ENCODE measurements at regions of chr19 and their contacts with region 1.

Region 1: GRCh38 chr19:6737284-6738046 is at the start of gene GPR108:
- DNase-seq: peak; percentile 100
- H3K4me3 ChIP-seq: peak within 1 kb of the TSS; percentile 49 to 99 (median 95)
- H3K27ac ChIP-seq: peak within 1 kb of the TSS; percentile 88
- H3K4me1 ChIP-seq: peaks cover 46% of the 10 kb centered on the region
- H3K27me3 ChIP-seq: no peaks in the 10 kb centered on the region
- CTCF ChIP-seq: no peak
- POLR2A ChIP-seq: peak; percentile 51
- total RNA-seq, gene GPR108: 52.6 and 68.5 TPM in 2 replicates

Region 2: GRCh38 chr19:4909897-4910593 is 1827.4 kb before region 1 on chr19:
- CTCF ChIA-PET with region 1: no interaction called
- POLR2A ChIA-PET with region 1: no interaction called
- dilution Hi-C with region 1: no loop called
- intact Hi-C with region 1: loop called (anchors 5 kb)
- DNase-seq: peak; percentile 87
- H3K4me3 ChIP-seq: peak overlapping the region; percentile 71 to 77 (median 74)
- H3K27ac ChIP-seq: peak overlapping the region; percentile 58
- H3K4me1 ChIP-seq: peaks cover 26% of the 10 kb centered on the region
- H3K27me3 ChIP-seq: no peaks in the 10 kb centered on the region
- CTCF ChIP-seq: no peak
- POLR2A ChIP-seq: no peak

Region 3: GRCh38 chr19:6212403-6213265 is 524.8 kb before region 1 on chr19:
- CTCF ChIA-PET with region 1: no interaction called
- POLR2A ChIA-PET with region 1: no interaction called
- dilution Hi-C with region 1: no loop called
- intact Hi-C with region 1: no loop called
- DNase-seq: no peak
- H3K4me3 ChIP-seq: no peak overlapping the region
- H3K27ac ChIP-seq: no peak overlapping the region
- H3K4me1 ChIP-seq: no peaks in the 10 kb centered on the region
- H3K27me3 ChIP-seq: no peaks in the 10 kb centered on the region
- CTCF ChIP-seq: no peak
- POLR2A ChIP-seq: no peak

Region 4: GRCh38 chr19:6424939-6425731 is 312.3 kb before region 1 on chr19:
- CTCF ChIA-PET with region 1: no interaction called
- POLR2A ChIA-PET with region 1: no interaction called
- dilution Hi-C with region 1: no loop called
- intact Hi-C with region 1: loop called (anchors 10 kb)
- DNase-seq: peak; percentile 100
- H3K4me3 ChIP-seq: no peak overlapping the region
- H3K27ac ChIP-seq: no peak overlapping the region
- H3K4me1 ChIP-seq: peaks cover 8% of the 10 kb centered on the region
- H3K27me3 ChIP-seq: no peaks in the 10 kb centered on the region
- CTCF ChIP-seq: no peak
- POLR2A ChIP-seq: peak; percentile 41

Region 5: DNA sequence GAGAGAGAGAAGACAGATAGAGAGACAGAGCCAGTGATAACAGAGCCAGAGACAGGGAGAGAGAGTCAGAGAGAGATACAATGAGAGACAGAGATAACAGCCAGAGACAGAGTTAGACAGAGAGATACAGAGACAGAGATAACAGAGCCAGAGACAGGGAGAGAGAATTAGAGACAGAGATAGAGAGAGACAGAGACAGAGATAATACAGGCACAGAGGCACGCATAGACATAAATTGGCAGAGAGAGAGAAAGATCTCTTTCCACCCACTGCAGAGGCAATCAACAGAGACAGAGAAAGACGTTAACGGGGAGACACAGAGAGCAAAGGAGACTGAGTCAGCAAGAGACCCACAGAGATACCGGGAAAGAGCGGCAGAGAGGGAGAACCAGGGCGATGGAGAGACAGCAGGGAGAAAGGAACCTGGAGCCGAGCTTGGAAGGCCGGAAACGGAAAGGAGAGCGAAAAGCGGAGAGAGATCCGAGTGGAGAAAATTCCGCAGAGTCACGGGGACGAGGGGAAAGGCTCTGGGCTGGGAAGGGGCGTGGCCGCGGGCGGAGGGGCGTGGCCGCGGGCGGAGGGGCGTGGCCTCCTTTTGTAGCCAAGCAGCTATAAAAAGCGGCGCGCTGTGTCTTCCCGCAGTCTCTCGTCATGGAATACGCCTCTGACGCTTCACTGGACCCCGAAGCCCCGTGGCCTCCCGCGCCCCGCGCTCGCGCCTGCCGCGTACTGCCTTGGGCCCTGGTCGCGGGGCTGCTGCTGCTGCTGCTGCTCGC is 206.9 kb before region 1 on chr19 and contains the start of gene TNFSF9:
- CTCF ChIA-PET with region 1: no interaction called
- POLR2A ChIA-PET with region 1: no interaction called
- dilution Hi-C with region 1: no loop called
- intact Hi-C with region 1: loop called (anchors 5 kb)
- DNase-seq: peak; percentile 86
- H3K4me3 ChIP-seq: peak within 1 kb of the TSS; percentile 42 to 80 (median 74)
- H3K27ac ChIP-seq: peak within 1 kb of the TSS; percentile 60
- H3K4me1 ChIP-seq: peaks cover 4% of the 10 kb centered on the region
- H3K27me3 ChIP-seq: peaks cover 17 to 20% of the 10 kb centered on the region in 2 experiments
- CTCF ChIP-seq: no peak
- POLR2A ChIP-seq: peak; percentile 83
- total RNA-seq, gene TNFSF9: 0.53 and 0.72 TPM in 2 replicates

Region 6: DNA sequence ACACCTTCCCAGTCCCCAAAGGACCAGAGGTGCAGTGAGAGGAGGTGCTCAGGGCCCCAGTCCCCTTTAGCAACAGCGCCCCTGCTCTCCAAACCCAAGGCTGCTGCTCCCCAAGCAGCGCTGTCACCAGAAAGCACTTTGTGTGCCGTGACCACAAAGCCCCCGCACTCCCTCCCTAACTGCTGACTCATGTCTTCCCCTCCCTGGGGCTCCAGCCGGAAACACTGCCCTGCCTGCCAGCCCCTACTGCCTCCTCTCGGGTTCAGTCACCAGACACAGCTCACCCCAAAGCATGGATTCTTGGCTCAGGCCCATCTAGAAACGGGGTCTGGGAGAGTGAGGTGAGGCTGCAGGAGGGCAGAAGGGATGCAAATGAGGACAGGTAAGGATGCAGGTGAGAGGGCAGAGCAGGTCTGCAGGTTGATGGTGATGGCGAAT is 62.6 kb before region 1 on chr19:
- CTCF ChIA-PET with region 1: no interaction called
- POLR2A ChIA-PET with region 1: no interaction called
- dilution Hi-C with region 1: no loop called
- intact Hi-C with region 1: loop called (anchors 10 kb)
- DNase-seq: peak; percentile 56
- H3K4me3 ChIP-seq: no peak overlapping the region
- H3K27ac ChIP-seq: no peak overlapping the region
- H3K4me1 ChIP-seq: peaks cover 7% of the 10 kb centered on the region
- H3K27me3 ChIP-seq: no peaks in the 10 kb centered on the region
- CTCF ChIP-seq: no peak
- POLR2A ChIP-seq: no peak

Region 7: DNA sequence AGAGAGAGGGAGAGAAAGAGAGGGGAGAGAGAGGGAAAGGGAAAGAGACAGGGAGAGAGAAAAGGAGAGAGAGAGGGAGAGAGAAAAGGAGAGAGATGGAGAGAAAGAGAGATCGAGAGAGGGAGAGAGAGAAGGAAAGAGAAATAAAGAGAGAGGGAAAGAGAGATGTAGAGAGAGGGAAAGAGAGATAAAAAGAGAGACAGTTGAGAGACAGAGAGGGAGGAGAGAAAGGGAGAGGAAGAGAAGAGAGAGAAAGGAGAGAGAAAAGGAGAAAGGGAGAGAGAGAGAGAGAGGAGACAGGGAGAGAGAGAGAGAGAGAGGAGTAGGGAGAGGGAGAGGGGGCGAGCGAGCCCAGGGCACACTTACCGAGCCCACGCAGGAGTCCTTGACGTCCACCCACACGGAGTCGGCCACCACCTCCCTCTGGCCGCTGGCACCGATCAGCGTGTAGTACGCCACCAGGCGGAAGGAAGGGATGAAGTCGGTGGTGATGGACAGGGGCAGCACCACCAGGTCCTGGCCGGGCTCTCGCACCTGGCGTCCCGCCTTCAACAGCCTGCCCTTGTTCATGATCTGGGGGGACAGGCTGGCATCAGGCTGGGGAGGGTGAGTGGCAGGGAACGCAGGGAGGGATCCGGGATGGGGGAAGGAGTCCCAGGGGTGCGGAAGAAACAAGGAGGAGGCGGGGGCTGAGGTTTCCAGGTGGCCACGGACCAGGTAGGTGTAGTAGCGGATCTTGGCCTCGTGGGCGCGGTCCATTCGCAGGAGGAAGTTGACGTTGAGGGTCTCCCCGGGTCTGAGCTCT is 27.0 kb before region 1 on chr19:
- CTCF ChIA-PET with region 1: no interaction called
- POLR2A ChIA-PET with region 1: no interaction called
- dilution Hi-C with region 1: no loop called
- intact Hi-C with region 1: no loop called
- DNase-seq: no peak
- H3K4me3 ChIP-seq: no peak overlapping the region
- H3K27ac ChIP-seq: no peak overlapping the region
- H3K4me1 ChIP-seq: no peaks in the 10 kb centered on the region
- H3K27me3 ChIP-seq: peaks cover 2 to 5% of the 10 kb centered on the region in 2 experiments
- CTCF ChIP-seq: no peak
- POLR2A ChIP-seq: no peak

Region 8: DNA sequence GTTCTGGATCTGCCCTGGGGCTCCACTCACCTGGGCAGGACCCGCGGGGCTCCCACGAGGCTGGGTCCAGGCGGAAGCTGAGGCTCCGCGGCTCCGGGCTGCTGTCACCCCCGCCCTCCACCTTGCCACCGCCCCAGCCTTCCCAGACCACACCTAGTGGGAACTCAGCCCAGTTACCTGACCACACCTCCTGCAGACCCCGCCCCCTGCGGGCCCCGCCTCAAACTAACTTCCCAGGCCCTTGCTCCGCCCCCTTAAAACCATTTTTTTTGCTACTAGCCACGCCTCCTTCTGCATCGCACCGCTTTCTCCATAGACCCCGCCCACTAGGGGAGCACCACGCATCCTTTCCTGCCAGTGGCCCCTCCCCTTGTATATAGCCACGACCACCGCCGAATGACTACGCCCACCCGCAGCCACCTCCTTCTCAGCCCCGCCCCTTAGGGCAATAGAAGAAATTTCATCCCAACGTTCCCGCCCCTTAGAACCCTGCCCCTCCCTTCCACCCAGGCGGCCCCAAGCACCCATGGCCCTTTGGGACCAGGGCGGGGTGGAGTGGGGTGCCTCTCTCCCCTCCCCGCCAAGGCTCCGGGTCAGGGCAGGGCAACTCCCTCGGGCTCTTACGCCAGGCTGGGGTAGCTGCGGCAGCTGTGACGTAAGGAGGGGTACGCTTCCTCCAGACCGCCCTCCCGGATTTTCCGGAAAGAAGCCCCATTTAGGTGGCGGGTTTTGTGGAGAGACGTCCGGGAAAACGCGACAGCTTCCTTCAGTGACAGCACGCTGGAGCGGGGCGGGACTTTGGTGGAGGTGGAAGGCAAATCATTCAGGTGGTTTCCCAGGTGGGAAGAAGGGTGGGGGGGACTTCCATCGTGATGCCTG is 30.1 kb after region 1 on chr19 and contains the start of gene SH2D3A:
- CTCF ChIA-PET with region 1: interaction called, 16 read pairs
- POLR2A ChIA-PET with region 1: no interaction called
- dilution Hi-C with region 1: no loop called
- intact Hi-C with region 1: loop called (anchors 1 kb)
- DNase-seq: peak; percentile 37
- H3K4me3 ChIP-seq: peak within 1 kb of the TSS in 1 of 3 experiments; percentile 4
- H3K27ac ChIP-seq: no peak within 1 kb of the TSS
- H3K4me1 ChIP-seq: peaks cover 4% of the 10 kb centered on the region
- H3K27me3 ChIP-seq: peaks cover 5 to 9% of the 10 kb centered on the region in 2 experiments
- CTCF ChIP-seq: no peak
- POLR2A ChIP-seq: no peak
- total RNA-seq, gene SH2D3A: 0.53 TPM in 1 of 2 replicates, not detected in the other

Region 9: DNA sequence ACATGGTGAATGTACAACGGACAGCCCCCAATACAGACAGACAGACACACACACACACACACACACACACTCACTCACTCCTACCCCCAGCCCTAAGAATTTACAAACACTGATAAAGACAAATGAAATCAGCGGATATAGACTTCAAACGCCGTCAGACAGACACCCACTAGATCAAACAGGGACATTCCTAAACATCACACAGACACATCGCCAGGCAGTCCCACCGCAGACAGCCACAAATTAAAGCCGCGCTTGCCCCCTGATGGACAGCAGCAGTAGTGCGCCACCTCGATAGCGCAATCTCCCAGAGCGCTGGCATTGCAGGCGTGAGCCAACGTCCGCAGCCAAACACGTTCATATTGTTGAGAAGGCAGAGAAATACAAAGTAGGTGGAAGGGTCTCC is 125.2 kb after region 1 on chr19:
- CTCF ChIA-PET with region 1: interaction called, 179 read pairs
- POLR2A ChIA-PET with region 1: interaction called, 5 read pairs
- dilution Hi-C with region 1: no loop called
- intact Hi-C with region 1: loop called (anchors 1 kb)
- DNase-seq: peak; percentile 78
- H3K4me3 ChIP-seq: no peak overlapping the region
- H3K27ac ChIP-seq: no peak overlapping the region
- H3K4me1 ChIP-seq: no peaks in the 10 kb centered on the region
- H3K27me3 ChIP-seq: no peaks in the 10 kb centered on the region
- CTCF ChIP-seq: peak; percentile 90 to 95
- POLR2A ChIP-seq: no peak

Measured in endothelial cell of umbilical vein (primary cell).